ENCODE measurements at regions of chr7 and their contacts with region 1.

Region 1: GRCh38 chr7:143884969-143885559 is 16.9 kb downstream of the TCAF1 start:
- DNase-seq: peak; percentile 83 to 99 (median 90)

Region 2: DNA sequence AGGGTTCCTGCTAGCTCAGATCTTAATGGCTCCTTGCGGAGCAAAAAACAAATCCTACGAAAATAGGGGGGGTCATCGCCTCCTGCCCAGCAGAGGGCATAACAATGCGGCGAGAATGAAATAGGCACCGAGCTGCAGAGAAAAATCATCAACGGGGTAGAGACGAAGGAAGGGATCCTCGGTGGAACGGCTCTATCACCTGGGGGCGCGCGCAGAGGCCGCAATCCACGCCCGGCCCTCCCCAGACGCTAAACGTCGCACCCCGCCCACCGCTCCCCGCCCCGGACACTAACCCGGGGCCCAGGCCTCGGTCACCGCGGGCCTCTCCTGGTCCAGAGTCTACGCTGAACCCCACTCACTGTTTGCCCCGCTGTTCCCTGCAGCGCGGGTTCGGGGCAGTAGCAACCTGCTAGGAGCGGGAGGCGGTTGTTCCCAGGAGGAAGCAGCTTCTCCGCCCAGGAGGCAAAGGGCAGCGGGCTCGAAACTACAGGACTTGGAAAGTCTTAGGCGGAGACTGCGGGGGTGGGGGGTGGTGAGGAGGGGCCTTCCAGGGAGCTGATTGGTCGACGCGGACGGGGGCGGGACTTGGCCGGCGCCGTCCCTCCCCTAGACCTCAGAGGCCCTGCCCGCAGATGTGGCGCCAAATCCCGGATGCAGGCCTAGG is 16.7 kb after region 1 on chr7 and contains the start of gene TCAF1:
- intact Hi-C with region 1: loop called (anchors 2 kb)
- DNase-seq: peak; percentile 91 to 99 (median 94)

Region 3: GRCh38 chr7:143938379-143939243 is 53.5 kb after region 1 on chr7:
- intact Hi-C with region 1: no loop called
- DNase-seq: no peak

Region 4: DNA sequence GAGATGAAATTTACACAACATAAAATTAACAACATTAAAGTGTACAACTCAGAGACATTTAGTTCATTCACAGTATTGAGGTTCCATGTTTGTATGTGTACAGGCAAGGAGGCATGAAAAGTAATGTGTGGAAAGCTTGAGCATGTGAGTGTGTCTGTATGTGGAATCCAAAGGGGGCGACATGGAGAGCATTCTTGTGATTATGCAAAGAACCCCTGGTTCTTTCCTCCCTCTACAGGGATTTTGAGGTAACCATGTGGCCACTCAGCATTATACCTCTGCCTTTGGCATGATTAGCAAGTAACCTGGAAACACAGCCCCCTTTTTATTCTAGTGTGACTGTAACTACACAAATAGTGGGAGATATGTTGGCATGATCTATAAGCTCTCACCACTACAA is 90.6 kb after region 1 on chr7:
- intact Hi-C with region 1: no loop called
- DNase-seq: no peak

Region 5: DNA sequence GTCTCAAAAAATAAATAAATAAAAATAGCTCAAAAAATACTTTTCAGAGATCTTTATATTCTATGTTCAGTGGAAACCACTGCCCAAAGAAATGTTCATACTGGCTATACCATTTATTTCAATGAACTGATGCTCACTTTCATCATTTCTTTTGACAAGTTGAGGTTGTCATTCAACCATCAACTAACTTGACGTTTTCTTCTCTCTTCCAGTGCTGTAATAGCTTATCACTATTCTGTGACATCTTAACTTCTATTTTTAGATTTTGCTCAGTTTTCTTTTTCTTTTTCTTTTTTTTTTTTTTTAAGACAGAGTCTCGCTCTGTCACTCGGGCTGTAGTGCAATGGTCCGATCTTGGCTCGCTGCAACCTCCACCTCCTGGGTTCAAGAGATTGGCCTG is 289.5 kb after region 1 on chr7:
- intact Hi-C with region 1: no loop called
- DNase-seq: no peak